ENCODE measurements at regions of chr11 and their contacts with region 1.

Region 1: DNA sequence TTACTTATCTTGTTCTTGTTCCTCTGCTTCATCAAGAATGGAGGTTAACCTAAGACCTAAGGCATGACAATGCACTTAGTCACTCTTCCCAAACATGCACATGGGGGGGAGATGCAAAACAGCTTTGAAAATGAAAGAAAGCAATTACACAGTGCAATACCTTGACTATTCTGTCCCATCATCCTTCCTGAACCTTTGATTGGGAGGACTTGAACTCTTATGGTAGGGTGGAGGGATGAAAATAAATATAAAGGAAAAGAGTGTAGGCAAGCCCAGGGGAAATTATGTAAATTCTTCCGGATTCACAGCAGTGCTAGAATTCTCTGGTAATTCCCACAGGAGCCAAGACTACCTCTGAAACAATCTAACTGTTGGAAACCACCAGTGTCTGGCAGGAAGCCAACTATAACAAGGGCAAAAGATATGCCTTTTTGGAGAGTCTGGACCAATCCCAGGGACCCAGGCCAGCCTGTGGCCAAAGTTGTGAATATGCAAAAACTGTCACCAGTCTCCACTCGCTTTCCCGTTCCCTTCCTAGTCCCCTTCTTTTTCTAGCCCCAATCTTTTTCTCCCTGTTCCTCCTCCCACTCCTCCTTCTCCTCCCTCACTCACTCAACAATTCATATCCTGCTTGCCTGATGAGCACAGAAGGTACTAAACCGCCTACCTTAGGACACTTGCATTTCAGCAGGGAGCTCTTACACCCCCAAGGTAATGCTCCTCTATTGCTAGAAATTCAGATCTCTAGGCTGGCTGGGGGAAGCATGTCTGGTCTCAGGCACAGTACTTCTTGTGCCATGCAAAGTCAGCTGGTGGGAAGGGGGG is 2.5 kb upstream of the RCN1 start:
- DNase-seq: peak; percentile 84
- H3K4me3 ChIP-seq: peak overlapping the region in 1 of 3 experiments; percentile 28
- H3K27ac ChIP-seq: peak overlapping the region; percentile 58
- H3K4me1 ChIP-seq: peaks cover 28% of the 10 kb centered on the region
- H3K27me3 ChIP-seq: no peaks in the 10 kb centered on the region
- CTCF ChIP-seq: no peak

Region 2: DNA sequence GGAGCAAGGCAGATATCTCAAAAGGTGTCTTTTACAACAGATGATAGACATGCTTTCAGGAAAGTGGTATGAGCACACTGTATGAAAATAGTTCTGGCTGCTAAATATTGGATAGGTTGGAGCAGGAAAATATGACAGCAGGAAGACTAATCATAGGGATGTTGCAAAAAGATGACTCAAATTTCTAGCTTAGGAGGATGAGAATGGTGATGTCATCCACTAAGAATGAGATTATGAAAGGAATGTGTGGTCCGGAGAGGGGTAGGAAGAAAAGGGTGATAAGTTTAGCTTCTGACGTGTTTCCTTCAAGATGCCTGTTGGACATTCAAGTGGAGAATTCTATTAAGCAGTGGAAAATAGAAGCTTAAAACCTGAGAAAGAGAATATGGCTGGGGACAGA is 48.9 kb after region 1 on chr11:
- CTCF ChIA-PET with region 1: no interaction called
- dilution Hi-C with region 1: no loop called
- in situ Hi-C with region 1: no loop called
- intact Hi-C with region 1: loop called (anchors 1 kb)
- DNase-seq: peak; percentile 93
- H3K4me3 ChIP-seq: no peak overlapping the region
- H3K27ac ChIP-seq: peak overlapping the region; percentile 74
- H3K4me1 ChIP-seq: peaks cover 18% of the 10 kb centered on the region
- H3K27me3 ChIP-seq: no peaks in the 10 kb centered on the region
- CTCF ChIP-seq: no peak